ENCODE measurements at regions of chr4 and their contacts with region 1.

Region 1: DNA sequence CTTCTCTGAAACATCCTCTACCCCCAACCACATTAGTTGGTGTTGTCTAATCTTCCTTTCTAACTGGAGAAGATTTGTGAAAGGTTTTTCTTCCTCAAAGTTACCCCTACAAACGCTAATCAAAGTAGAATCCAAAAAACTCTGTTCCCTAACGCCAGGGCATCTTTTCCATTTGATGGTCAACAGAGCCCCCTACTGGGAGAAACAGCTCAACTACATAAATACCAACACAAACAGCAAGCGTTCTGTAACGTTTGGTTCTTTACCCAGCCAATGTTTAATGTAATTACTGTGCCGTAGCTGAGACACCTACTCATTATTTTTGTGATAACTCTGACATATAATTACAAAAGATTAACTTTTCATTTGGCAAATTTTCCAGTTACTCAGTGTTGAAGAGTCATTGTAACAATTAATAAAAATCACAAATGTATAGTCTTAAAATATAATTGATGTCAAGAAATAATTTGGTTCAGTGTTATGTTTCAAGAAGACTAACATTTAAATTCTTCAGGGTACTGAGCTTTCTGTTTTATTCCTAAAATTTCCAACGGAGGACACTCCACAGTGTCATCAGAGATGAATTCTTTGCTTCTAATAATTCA is 94.9 kb upstream of the TBC1D9 start:
- DNase-seq: peak in 3 of 6 donors; percentile 14 to 52 (median 40)
- ATAC-seq: peak; percentile 64 to 95 (median 88)
- H3K4me3 ChIP-seq: no peak overlapping the region
- H3K27ac ChIP-seq: no peak overlapping the region
- H3K4me1 ChIP-seq: no peaks in the 10 kb centered on the region
- H3K27me3 ChIP-seq: no peaks in the 10 kb centered on the region
- CTCF ChIP-seq: peak in 2 of 4 donors; percentile 67 to 74

Region 2: DNA sequence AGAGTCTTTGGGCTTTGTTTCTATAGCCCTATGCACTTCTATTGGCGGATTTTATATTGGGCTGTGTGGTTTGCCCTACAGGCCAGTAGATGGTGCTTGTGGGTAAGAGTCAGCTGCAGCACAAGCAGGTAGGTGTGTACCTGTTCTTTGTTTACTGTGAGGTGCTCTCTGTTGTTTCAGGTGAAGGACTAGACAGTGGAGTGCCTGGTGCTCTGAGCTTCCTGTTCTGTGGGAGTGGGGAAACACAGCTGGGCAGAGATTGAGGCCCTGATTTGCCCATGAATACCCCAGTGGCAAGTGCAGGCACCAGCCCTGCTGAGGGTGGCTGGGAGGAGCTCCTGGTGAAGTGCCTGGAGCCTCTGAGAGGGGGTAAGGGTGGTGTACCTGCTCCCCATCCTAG is 256.1 kb before region 1 on chr4:
- intact Hi-C with region 1: loop called in 2 of 3 experiments (anchors 5 to 10 kb)
- DNase-seq: peak in 3 of 6 donors; percentile 14 to 56 (median 27)
- ATAC-seq: peak; percentile 86 to 99 (median 96)
- H3K4me3 ChIP-seq: no peak overlapping the region
- H3K27ac ChIP-seq: no peak overlapping the region
- H3K4me1 ChIP-seq: no peaks in the 10 kb centered on the region
- H3K27me3 ChIP-seq: no peaks in the 10 kb centered on the region
- CTCF ChIP-seq: peak; percentile 11 to 51 (median 36)

Region 3: DNA sequence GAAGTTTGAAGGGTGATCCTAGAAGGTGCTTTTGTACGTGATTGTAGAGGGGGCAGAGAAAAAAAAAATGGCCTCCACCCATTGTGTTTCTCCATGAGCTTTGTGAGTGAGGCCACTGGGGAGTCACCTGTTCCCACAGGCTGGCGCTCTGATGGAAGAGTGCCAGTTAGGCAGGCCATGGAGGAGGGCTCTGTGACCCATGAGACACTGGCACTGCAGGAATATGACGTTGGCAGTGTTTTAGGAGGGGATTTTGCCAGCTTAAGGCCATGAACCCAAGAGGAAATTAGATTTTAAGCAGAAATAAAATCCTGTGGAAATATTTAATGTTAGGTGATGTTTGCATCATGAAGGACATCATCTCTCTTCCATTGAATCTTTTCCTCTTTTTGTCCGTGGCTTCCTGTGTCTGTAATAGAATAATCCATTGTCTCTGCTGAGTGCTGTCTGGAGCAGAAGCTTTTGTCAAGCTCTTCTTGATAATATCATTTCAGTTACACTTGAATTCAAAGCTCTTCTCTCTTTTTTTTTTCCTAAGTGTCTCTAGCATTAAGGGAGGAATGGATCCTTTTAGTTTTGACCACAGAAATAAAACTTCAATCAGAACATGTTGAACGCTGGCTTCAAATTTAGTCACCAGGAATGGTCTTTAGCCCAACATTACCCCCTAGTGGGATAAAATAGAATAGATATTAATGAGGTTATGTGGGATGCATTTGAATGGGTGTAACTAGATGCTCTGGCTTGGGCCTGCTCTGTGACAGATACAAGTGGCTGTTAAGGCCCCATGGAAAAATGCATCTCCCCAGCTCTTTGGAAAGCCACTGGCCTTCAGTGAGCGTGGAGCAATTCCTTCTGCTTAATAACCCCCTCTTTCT is 241.3 kb before region 1 on chr4:
- intact Hi-C with region 1: loop called in 1 of 3 experiments (anchors 10 kb)
- DNase-seq: peak in 2 of 6 donors; percentile 14 to 36
- ATAC-seq: peak; percentile 61 to 92 (median 90)
- H3K4me3 ChIP-seq: no peak overlapping the region
- H3K27ac ChIP-seq: no peak overlapping the region
- H3K4me1 ChIP-seq: no peaks in the 10 kb centered on the region
- H3K27me3 ChIP-seq: peaks cover 0 to 4% (median 0%) of the 10 kb centered on the region in 4 donors
- CTCF ChIP-seq: peak in 3 of 4 donors; percentile 11 to 36 (median 19)

Measured in pancreas (tissue), 10 donors.